ENCODE measurements at regions of chr12 and their contacts with region 1.

Region 1: GRCh38 chr12:53159195-53159839 is 21.2 kb upstream of the ZNF740 start:
- DNase-seq: peak; percentile 97
- H3K4me3 Mint-ChIP-seq: no peak overlapping the region
- H3K27ac Mint-ChIP-seq: peak overlapping the region; percentile 6
- H3K4me1 Mint-ChIP-seq: peaks cover 7% of the 10 kb centered on the region
- H3K27me3 Mint-ChIP-seq: no peaks in the 10 kb centered on the region

Region 2: DNA sequence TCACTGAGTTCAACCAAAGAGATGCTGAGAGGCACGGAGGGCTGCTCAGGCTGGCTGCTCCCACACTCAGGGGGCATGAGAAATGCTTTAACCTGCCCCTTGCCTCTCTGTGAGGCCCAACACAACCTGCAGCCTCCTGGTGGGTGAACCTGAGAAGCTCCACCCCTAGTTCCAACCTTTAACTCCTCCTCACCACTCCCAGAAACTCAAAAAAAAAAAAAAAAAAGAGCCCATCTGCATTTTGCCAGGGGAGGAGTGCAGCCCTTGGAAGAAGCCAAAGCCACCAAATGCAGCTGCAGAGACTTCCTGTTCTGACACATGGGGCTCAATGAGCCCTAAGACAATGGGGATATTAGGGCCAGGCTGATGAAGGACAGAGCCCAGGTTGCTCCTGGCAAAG is 354.3 kb before region 1 on chr12:
- CTCF ChIA-PET with region 1: no interaction called
- intact Hi-C with region 1: no loop called
- DNase-seq: no peak
- H3K4me3 Mint-ChIP-seq: no peak overlapping the region
- H3K27ac Mint-ChIP-seq: no peak overlapping the region
- H3K4me1 Mint-ChIP-seq: no peaks in the 10 kb centered on the region
- H3K27me3 Mint-ChIP-seq: no peaks in the 10 kb centered on the region

Region 3: DNA sequence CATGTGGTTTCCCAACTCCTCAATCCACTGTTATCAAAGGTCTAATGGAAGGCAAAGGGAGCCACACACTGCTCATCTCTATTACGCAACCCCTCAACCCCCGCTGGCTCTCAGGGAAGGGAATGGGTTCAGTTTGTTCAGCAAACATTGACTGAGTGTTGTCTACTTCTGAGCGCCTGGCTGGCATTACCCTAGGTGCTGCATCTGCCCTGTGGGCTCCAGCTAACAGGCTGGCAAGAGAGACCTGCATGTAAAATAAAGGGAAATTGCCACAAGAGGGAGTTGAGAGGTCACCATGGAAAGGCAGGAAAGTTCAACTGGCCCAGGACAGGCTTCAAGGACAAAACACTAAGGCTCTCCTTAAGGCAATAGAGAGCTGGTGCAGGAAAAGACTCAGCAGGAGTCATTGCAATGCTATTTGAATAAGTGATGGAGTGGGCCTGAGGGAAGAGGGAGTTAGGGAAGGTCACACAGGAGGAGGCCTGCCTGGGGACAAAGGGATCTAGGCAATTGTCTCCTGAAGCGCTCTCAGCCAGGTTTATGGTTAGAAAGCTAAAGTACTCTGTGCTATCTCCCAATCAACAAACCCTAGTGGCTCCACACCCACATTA is 15.7 kb after region 1 on chr12:
- CTCF ChIA-PET with region 1: interaction called, 12 read pairs
- intact Hi-C with region 1: loop called (anchors 1 kb)
- DNase-seq: no peak
- H3K4me3 Mint-ChIP-seq: no peak overlapping the region
- H3K27ac Mint-ChIP-seq: no peak overlapping the region
- H3K4me1 Mint-ChIP-seq: peaks cover 13% of the 10 kb centered on the region
- H3K27me3 Mint-ChIP-seq: no peaks in the 10 kb centered on the region

Region 4: GRCh38 chr12:53200458-53201176 is 41.3 kb after region 1 on chr12:
- CTCF ChIA-PET with region 1: interaction called, 61 read pairs
- intact Hi-C with region 1: loop called (anchors 1 kb)
- DNase-seq: peak; percentile 71
- H3K4me3 Mint-ChIP-seq: peak overlapping the region; percentile 45
- H3K27ac Mint-ChIP-seq: peak overlapping the region; percentile 90
- H3K4me1 Mint-ChIP-seq: peaks cover 74% of the 10 kb centered on the region
- H3K27me3 Mint-ChIP-seq: no peaks in the 10 kb centered on the region

Region 5: DNA sequence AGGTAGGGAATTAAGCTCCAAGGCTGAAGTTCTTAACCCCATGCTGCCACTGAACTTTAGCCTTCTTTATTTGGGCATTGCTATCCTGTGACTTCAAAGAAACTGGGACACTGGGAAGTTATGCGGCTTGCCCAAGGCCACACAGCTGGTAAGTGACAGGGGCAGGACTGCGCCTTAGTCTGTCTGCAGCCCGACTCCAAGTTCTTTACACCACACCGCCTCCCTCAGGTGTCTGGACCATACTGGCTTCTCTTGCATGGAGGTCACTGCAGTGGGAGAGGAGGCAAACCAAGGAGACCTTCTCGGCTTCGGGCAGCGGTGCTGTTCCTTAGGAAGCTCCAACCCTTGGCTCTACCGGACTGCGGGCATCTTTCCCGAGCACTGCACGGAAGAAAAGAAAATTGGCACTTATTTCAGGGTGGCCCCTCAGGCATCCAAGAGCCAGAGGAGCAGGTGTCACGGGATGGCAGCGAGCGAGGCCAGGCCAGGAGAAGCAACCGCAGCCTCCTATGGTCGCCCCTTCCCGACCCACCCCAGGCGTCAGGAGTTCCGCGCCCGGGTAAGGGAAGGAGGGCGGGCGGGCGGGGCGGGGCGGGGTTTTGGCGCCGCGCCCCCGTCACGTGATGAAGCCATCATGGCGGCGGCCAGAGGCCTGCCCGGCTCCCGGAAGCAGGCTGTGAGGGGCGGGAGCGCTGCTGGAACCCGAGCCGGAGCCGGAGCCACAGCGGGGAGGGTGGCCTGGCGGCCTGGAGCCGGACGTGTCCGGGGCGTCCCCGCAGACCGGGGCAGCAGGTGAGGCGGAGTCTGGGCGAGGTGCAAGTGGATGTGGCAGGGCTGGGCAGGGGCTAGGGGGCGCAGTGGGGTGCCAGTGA is 92.4 kb after region 1 on chr12:
- CTCF ChIA-PET with region 1: interaction called, 9 read pairs
- intact Hi-C with region 1: loop called (anchors 1 kb)
- DNase-seq: peak; percentile 85
- H3K4me3 Mint-ChIP-seq: peak overlapping the region; percentile 97
- H3K27ac Mint-ChIP-seq: peak overlapping the region; percentile 87
- H3K4me1 Mint-ChIP-seq: peaks cover 40% of the 10 kb centered on the region
- H3K27me3 Mint-ChIP-seq: no peaks in the 10 kb centered on the region

Region 6: GRCh38 chr12:53344824-53345485 is 185.6 kb after region 1 on chr12:
- CTCF ChIA-PET with region 1: interaction called, 16 read pairs
- intact Hi-C with region 1: loop called (anchors 1 kb)
- DNase-seq: peak; percentile 86
- H3K4me3 Mint-ChIP-seq: peak overlapping the region; percentile 91
- H3K27ac Mint-ChIP-seq: no peak overlapping the region
- H3K4me1 Mint-ChIP-seq: peaks cover 9% of the 10 kb centered on the region
- H3K27me3 Mint-ChIP-seq: no peaks in the 10 kb centered on the region

Region 7: DNA sequence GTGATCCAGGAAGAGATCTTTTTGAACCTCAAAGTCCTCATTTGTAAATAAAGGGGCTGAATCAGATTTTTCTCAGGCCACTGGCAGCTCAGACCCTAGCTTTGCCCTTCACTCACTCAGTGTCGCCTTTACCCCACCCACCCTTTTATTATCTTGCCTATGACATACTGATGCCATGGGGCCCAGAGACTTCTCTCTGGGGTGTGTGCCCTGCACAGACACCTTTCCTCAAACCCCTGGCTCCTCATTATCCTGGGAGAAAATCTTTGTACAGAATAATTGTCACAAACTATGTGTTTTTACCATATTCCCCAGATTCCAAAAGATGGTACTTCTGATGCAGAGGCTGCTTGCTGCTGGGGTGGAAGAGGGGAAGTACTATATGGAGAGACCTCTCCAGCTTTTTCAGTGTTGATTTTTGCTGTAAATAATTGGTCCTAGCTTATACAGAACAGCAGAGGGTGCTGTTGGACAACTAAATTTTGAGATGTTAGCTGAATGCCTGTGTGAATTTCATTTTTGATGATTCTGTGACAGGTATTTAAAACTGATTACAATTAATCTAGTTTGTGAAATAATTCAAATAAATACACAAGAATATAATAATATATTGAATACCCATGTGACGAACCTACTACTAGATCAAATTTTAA is 1542.7 kb after region 1 on chr12:
- CTCF ChIA-PET with region 1: no interaction called
- intact Hi-C with region 1: no loop called
- DNase-seq: no peak
- H3K4me3 Mint-ChIP-seq: no peak overlapping the region
- H3K27ac Mint-ChIP-seq: no peak overlapping the region
- H3K4me1 Mint-ChIP-seq: no peaks in the 10 kb centered on the region
- H3K27me3 Mint-ChIP-seq: no peaks in the 10 kb centered on the region

Measured in activated naive CD4-positive, alpha-beta T cell treated with anti-CD3 and anti-CD28 coated beads for 36 hours (primary cell).